Activated naive CD4-positive, alpha-beta T cell treated with anti-CD3 and anti-CD28 coated beads for 36 hours (primary cell): ENCODE measurements at regions of chr5 and their contacts with region 1.

Region 1: GRCh38 chr5:43191740-43192557 is at the start of gene NIM1K:
- DNase-seq: peak; percentile 60
- H3K4me3 Mint-ChIP-seq: peak within 1 kb of the TSS; percentile 72
- H3K27ac Mint-ChIP-seq: no peak within 1 kb of the TSS
- H3K4me1 Mint-ChIP-seq: peaks cover 31% of the 10 kb centered on the region
- H3K27me3 Mint-ChIP-seq: peaks cover 20% of the 10 kb centered on the region
- total RNA-seq, gene NIM1K: 0.54 to 0.57 TPM

Region 2: GRCh38 chr5:42994246-42995151 is 197.4 kb before region 1 on chr5:
- CTCF ChIA-PET with region 1: no interaction called
- intact Hi-C with region 1: loop called (anchors 2 kb)
- DNase-seq: peak; percentile 94
- H3K4me3 Mint-ChIP-seq: peak overlapping the region; percentile 99
- H3K27ac Mint-ChIP-seq: peak overlapping the region; percentile 100
- H3K4me1 Mint-ChIP-seq: peaks cover 17% of the 10 kb centered on the region
- H3K27me3 Mint-ChIP-seq: no peaks in the 10 kb centered on the region

Region 3: GRCh38 chr5:43105369-43106289 is 86.3 kb before region 1 on chr5:
- CTCF ChIA-PET with region 1: interaction called, 20 read pairs
- intact Hi-C with region 1: loop called (anchors 1 kb)
- DNase-seq: peak; percentile 92
- H3K4me3 Mint-ChIP-seq: peak overlapping the region; percentile 81
- H3K27ac Mint-ChIP-seq: peak overlapping the region; percentile 87
- H3K4me1 Mint-ChIP-seq: peaks cover 42% of the 10 kb centered on the region
- H3K27me3 Mint-ChIP-seq: no peaks in the 10 kb centered on the region

Region 4: GRCh38 chr5:43150748-43151147 is 41.2 kb before region 1 on chr5:
- CTCF ChIA-PET with region 1: no interaction called
- intact Hi-C with region 1: no loop called
- DNase-seq: no peak
- H3K4me3 Mint-ChIP-seq: no peak overlapping the region
- H3K27ac Mint-ChIP-seq: no peak overlapping the region
- H3K4me1 Mint-ChIP-seq: peaks cover 21% of the 10 kb centered on the region
- H3K27me3 Mint-ChIP-seq: no peaks in the 10 kb centered on the region

Region 5: DNA sequence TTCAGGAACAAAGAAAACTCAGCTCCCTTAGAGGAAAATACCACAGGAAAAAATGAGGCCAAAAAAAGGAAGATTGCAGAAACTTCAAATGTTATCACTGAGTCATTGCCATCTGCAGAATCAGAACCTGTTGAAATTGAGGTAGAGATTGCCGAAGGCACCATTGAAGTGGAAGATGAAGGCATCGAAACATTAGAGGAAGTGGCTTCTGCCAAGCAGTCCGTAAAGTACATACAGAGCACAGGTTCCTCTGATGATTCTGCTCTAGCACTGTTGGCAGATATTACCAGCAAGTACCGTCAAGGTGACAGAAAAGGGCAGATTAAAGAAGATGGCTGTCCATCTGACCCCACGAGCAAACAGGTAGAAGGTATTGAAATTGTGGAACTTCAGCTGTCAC is 30.7 kb before region 1 on chr5:
- CTCF ChIA-PET with region 1: no interaction called
- intact Hi-C with region 1: loop called (anchors 1 kb)
- DNase-seq: peak; percentile 38
- H3K4me3 Mint-ChIP-seq: no peak overlapping the region
- H3K27ac Mint-ChIP-seq: peak overlapping the region; percentile 44
- H3K4me1 Mint-ChIP-seq: peaks cover 24% of the 10 kb centered on the region
- H3K27me3 Mint-ChIP-seq: no peaks in the 10 kb centered on the region

Region 6: DNA sequence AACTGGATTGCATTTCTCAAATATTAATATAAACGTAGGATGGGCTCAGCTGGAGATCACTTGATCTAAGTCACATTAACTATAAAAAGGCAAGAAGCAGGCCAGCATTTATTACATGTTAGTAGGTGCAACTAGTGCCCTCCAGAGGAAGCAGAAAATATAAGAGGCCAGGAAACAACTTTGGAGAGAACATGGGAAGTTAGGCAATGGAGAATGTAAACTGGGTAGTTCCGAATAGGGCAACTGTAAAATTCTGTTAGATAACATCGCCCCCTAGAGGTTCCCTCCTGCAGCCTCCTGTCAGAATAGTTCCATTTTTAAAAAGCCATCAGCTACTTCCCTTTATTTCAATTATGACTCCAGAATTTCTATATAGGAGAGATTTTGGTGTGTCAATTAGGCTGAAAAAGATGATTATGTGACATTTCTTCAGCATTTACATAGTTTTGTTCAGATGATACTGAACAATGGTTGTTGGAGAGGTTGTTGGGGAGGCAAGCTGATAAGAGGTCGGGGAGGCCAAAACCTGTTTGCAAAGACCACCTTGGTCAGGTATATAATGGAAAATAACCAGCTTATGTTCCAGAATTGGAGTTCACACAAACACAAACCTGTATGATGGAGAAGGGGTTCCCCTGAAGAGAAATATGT is 197.9 kb after region 1 on chr5:
- CTCF ChIA-PET with region 1: interaction called, 8 read pairs
- intact Hi-C with region 1: loop called (anchors 1 kb)
- DNase-seq: peak; percentile 72
- H3K4me3 Mint-ChIP-seq: no peak overlapping the region
- H3K27ac Mint-ChIP-seq: no peak overlapping the region
- H3K4me1 Mint-ChIP-seq: peaks cover 32% of the 10 kb centered on the region
- H3K27me3 Mint-ChIP-seq: no peaks in the 10 kb centered on the region

Region 7: GRCh38 chr5:43497311-43498104 is 305.6 kb after region 1 on chr5:
- CTCF ChIA-PET with region 1: no interaction called
- intact Hi-C with region 1: no loop called
- DNase-seq: no peak
- H3K4me3 Mint-ChIP-seq: no peak overlapping the region
- H3K27ac Mint-ChIP-seq: no peak overlapping the region
- H3K4me1 Mint-ChIP-seq: no peaks in the 10 kb centered on the region
- H3K27me3 Mint-ChIP-seq: no peaks in the 10 kb centered on the region

Region 8: GRCh38 chr5:43602461-43603343 is 410.8 kb after region 1 on chr5 and contains the start of gene NNT:
- CTCF ChIA-PET with region 1: no interaction called
- intact Hi-C with region 1: loop called (anchors 2 kb)
- DNase-seq: peak; percentile 74
- H3K4me3 Mint-ChIP-seq: peak within 1 kb of the TSS; percentile 87
- H3K27ac Mint-ChIP-seq: peak within 1 kb of the TSS; percentile 92
- H3K4me1 Mint-ChIP-seq: peaks cover 45% of the 10 kb centered on the region
- H3K27me3 Mint-ChIP-seq: no peaks in the 10 kb centered on the region
- total RNA-seq, gene NNT: 98.4 to 98.9 TPM